IMR-90 (cell line): ENCODE measurements at regions of chr4 and their contacts with region 1.

Region 1: GRCh38 chr4:110196206-110196870 is 2.1 kb downstream of the ELOVL6 start:
- DNase-seq: peak; percentile 32
- ATAC-seq: peak; percentile 53
- H3K4me3 ChIP-seq: peak overlapping the region; percentile 76
- H3K27ac ChIP-seq: peak overlapping the region; percentile 69
- H3K4me1 ChIP-seq: no peaks in the 10 kb centered on the region
- H3K27me3 ChIP-seq: no peaks in the 10 kb centered on the region
- CTCF ChIP-seq: no peak
- POLR2A ChIP-seq: no peak
- RAD21 ChIP-seq: no peak

Region 2: DNA sequence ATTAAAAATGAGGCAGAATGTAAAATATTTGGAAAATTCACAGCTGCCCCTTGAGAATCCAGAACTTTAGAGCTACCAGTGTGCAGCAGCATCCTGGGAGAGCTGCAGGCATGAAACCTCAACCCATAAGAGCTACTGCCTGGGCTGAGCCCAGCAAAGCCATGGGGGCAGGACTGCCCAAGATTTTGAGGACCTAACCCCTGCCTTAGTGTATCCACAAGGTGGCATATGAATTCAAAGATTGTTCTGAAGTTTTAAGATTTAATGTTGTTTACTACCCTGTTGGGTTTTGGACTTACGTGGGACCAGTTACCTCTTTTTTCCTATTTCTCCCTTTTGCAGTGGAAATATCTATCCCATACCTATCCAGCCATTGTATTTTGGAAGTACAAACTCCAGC is 519.5 kb before region 1 on chr4:
- CTCF ChIA-PET with region 1: no interaction called
- POLR2A ChIA-PET with region 1: no interaction called
- dilution Hi-C with region 1: no loop called
- in situ Hi-C with region 1: no loop called
- intact Hi-C with region 1: no loop called
- DNase-seq: no peak
- ATAC-seq: no peak; the same call in 1 of the 2 replicates
- H3K4me3 ChIP-seq: no peak overlapping the region
- H3K27ac ChIP-seq: no peak overlapping the region
- H3K4me1 ChIP-seq: no peaks in the 10 kb centered on the region
- H3K27me3 ChIP-seq: no peaks in the 10 kb centered on the region
- CTCF ChIP-seq: no peak
- POLR2A ChIP-seq: no peak
- RAD21 ChIP-seq: no peak

Region 3: DNA sequence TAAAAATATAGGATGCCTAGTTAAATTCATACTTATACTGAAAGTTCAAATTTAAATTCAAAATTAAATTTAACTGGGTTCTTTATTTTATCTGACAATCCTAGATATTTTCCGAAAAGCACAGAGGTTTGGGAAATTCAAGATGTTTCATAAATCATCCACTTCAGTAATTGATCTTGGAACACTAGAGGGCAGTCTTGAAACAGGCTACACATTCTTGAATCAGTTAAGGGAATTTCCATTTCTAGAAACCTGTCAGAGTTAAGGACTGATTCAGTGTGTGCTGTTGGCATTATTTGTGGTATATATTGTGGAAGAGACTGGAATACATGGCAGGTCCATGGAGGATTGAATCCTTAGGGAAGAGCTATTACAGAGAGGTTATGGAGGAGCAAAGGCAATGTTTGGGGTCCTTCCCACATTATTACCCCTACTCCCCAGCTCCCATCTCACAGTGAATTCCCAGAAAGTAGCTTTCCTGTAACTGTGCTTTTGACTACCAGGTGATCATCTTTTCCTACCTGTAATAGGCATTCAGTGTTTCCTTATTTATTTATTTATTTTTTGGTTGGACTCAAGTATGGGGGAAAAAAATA is 190.8 kb before region 1 on chr4:
- CTCF ChIA-PET with region 1: no interaction called
- POLR2A ChIA-PET with region 1: no interaction called
- dilution Hi-C with region 1: no loop called
- in situ Hi-C with region 1: no loop called
- intact Hi-C with region 1: loop called (anchors 1 kb)
- DNase-seq: peak; percentile 78
- ATAC-seq: peak; percentile 67
- H3K4me3 ChIP-seq: no peak overlapping the region
- H3K27ac ChIP-seq: no peak overlapping the region
- H3K4me1 ChIP-seq: no peaks in the 10 kb centered on the region
- H3K27me3 ChIP-seq: no peaks in the 10 kb centered on the region
- CTCF ChIP-seq: peak; percentile 95
- POLR2A ChIP-seq: no peak
- RAD21 ChIP-seq: peak; percentile 95

Region 4: GRCh38 chr4:110049951-110050925 is 146.1 kb before region 1 on chr4:
- CTCF ChIA-PET with region 1: no interaction called
- POLR2A ChIA-PET with region 1: no interaction called
- dilution Hi-C with region 1: no loop called
- in situ Hi-C with region 1: loop called (anchors 5 kb)
- intact Hi-C with region 1: loop called (anchors 1 kb)
- DNase-seq: peak; percentile 52
- ATAC-seq: peak; percentile 78
- H3K4me3 ChIP-seq: no peak overlapping the region
- H3K27ac ChIP-seq: no peak overlapping the region
- H3K4me1 ChIP-seq: peaks cover 3% of the 10 kb centered on the region; the same call in 1 of the 2 replicates
- H3K27me3 ChIP-seq: no peaks in the 10 kb centered on the region
- CTCF ChIP-seq: peak; percentile 83
- POLR2A ChIP-seq: no peak
- RAD21 ChIP-seq: peak; percentile 84

Region 5: DNA sequence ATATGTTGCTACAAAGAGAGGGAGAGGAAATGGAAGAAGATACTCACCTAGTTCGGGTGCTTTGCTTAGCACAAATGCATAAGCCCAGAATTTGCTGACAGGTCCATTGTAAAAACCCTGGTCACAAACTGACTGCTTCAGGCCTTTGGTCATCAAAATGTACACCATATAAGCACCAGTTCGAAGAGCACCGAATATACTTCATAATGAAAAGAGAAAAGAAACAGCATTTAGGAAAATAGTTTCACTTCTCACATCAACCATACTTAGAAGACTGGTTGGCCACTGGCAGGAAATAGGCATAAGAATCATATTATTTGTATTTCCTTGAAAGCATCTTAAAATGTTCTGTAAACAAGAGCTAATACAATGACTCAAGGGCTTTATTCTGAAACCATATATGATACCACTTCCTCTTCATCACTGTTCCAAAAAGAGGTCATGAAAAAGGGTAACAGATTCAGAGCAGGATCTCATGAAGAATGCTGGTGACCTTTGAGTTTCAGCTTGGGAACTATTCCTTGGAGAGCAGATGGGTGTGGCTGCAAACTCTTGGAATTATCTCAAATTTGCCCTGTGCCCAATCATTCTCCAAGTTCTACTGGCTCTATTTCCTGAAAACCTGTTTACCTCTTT is 136.7 kb before region 1 on chr4:
- CTCF ChIA-PET with region 1: no interaction called
- POLR2A ChIA-PET with region 1: no interaction called
- dilution Hi-C with region 1: no loop called
- in situ Hi-C with region 1: loop called (anchors 5 kb)
- intact Hi-C with region 1: loop called (anchors 2 kb)
- DNase-seq: peak; percentile 13
- ATAC-seq: no peak; the same call in 1 of the 2 replicates
- H3K4me3 ChIP-seq: no peak overlapping the region
- H3K27ac ChIP-seq: no peak overlapping the region
- H3K4me1 ChIP-seq: peaks cover 7% of the 10 kb centered on the region; the same call in 1 of the 2 replicates
- H3K27me3 ChIP-seq: no peaks in the 10 kb centered on the region
- CTCF ChIP-seq: no peak
- POLR2A ChIP-seq: no peak
- RAD21 ChIP-seq: no peak

Region 6: GRCh38 chr4:110106928-110107296 is 89.4 kb before region 1 on chr4:
- CTCF ChIA-PET with region 1: no interaction called
- POLR2A ChIA-PET with region 1: no interaction called
- dilution Hi-C with region 1: no loop called
- in situ Hi-C with region 1: no loop called
- intact Hi-C with region 1: loop called (anchors 5 kb)
- DNase-seq: peak; percentile 85
- ATAC-seq: peak; percentile 86
- H3K4me3 ChIP-seq: no peak overlapping the region
- H3K27ac ChIP-seq: no peak overlapping the region
- H3K4me1 ChIP-seq: peaks cover 3% of the 10 kb centered on the region
- H3K27me3 ChIP-seq: no peaks in the 10 kb centered on the region
- CTCF ChIP-seq: no peak
- POLR2A ChIP-seq: no peak
- RAD21 ChIP-seq: no peak

Region 7: GRCh38 chr4:110160616-110161015 is 35.7 kb before region 1 on chr4:
- CTCF ChIA-PET with region 1: no interaction called
- POLR2A ChIA-PET with region 1: no interaction called
- dilution Hi-C with region 1: no loop called
- in situ Hi-C with region 1: no loop called
- intact Hi-C with region 1: loop called (anchors 2 kb)
- DNase-seq: no peak
- ATAC-seq: no peak
- H3K4me3 ChIP-seq: no peak overlapping the region
- H3K27ac ChIP-seq: no peak overlapping the region
- H3K4me1 ChIP-seq: peaks cover 19% of the 10 kb centered on the region
- H3K27me3 ChIP-seq: no peaks in the 10 kb centered on the region
- CTCF ChIP-seq: no peak
- POLR2A ChIP-seq: no peak
- RAD21 ChIP-seq: no peak